K562 (cell line): ENCODE measurements at regions of chr11 and their contacts with region 1.

Region 1: GRCh38 chr11:34890812-34891211 is 25.4 kb downstream of the APIP start:
- DNase-seq: peak in 2 of 4 experiments; percentile 17 to 53
- ATAC-seq: peak; percentile 71
- H3K4me3 ChIP-seq: no peak overlapping the region
- H3K27ac ChIP-seq: no peak overlapping the region
- H3K4me1 ChIP-seq: no peaks in the 10 kb centered on the region
- H3K27me3 ChIP-seq: no peaks in the 10 kb centered on the region
- CTCF ChIP-seq: peak; percentile 33 to 69 (median 41); a peak in 4 of 6 replicates
- EP300 ChIP-seq: no peak
- POLR2A ChIP-seq: no peak
- RAD21 ChIP-seq: peak; percentile 90 to 92

Region 2: DNA sequence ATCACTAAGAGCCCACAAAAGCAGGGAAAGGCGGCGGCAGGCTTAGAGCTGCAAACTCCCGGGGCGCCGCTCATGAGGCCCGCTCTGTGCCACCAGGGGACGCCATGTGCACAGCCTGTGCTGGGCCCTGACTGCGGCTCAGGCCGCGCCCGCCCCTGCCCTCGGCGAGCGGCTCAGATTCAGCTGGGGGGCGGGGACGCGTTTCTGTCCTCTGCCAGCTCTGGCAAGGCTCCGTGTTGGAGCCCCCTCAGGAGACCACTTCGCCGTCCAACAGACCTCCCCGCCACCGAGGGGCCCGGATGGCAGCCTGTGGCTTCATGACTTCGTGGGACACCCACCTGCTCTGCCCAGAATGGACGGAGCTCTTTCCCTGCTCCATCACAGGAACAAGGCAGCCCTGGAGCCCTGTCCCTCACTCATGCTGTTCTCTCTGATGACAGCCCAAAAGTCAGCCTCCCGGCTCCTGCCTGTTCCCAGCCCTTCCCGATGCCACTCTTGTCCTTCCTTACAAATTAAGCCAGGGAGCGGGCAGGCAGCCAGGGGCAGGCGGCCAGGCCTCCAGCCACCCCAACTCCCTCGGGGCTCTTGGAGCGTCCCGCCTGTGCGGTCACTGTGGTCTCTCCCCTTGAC is 716.3 kb before region 1 on chr11:
- CTCF ChIA-PET with region 1: interaction called, 8 read pairs
- POLR2A ChIA-PET with region 1: no interaction called
- in situ Hi-C with region 1: no loop called
- intact Hi-C with region 1: loop called (anchors 10 kb)
- DNase-seq: peak; percentile 84 to 90 (median 88)
- ATAC-seq: peak; percentile 99
- H3K4me3 ChIP-seq: peak overlapping the region; percentile 16; the same call in 1 of the 2 replicates
- H3K27ac ChIP-seq: no peak overlapping the region
- H3K4me1 ChIP-seq: peaks cover 2 to 18% of the 10 kb centered on the region in 2 experiments; a peak in 3 of 5 replicates
- H3K27me3 ChIP-seq: peaks cover 27 to 58% of the 10 kb centered on the region in 2 experiments; a peak in 4 of 5 replicates
- CTCF ChIP-seq: peak; percentile 88 to 97 (median 94)
- EP300 ChIP-seq: no peak
- POLR2A ChIP-seq: no peak
- RAD21 ChIP-seq: peak; percentile 97 to 99

Region 3: DNA sequence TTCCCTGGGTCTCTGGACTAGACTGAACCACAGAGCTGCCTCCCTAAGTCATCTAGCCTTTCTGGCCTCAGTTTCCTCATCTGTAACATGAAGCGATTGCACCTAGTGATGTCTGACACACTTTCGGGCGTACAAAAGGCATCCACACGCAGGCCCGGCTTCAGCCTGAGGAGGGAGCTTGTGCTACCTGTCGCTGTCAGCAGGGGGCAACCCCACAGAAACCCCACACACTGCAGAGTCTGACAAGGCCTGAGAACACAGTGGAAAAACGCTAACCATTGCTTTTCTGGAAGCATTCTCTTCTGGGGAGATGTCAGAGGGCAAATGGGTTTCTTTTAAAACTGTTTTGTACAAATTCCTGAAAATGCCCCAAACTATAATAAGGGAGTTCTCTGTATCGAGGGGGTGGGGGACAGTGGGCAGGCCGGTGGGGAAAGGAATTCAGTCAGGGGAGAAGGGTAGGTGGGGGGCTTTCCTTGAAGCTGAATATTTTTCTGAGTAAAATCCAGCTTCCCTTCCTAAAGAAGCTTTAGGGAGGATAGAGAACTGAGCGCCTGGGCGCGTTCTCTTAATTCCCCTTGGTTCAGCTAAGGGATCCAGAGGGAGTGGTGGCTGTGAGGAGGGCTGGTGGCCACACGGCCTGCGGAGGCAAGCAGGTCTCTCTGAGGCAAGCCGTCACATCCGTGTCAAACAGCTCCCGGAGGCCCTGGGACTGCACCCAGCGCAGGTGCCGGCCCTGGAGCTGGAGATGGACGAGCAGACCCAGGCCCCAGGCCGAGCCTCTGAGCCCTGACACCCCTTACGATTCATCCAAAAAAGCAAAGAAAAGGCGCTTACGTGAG is 377.8 kb before region 1 on chr11:
- CTCF ChIA-PET with region 1: interaction called, 4 read pairs
- POLR2A ChIA-PET with region 1: no interaction called
- in situ Hi-C with region 1: loop called (anchors 5 kb)
- intact Hi-C with region 1: loop called (anchors 2 kb)
- DNase-seq: peak; percentile 73 to 79 (median 77)
- ATAC-seq: peak; percentile 99
- H3K4me3 ChIP-seq: no peak overlapping the region
- H3K27ac ChIP-seq: no peak overlapping the region
- H3K4me1 ChIP-seq: peaks cover 0 to 3% of the 10 kb centered on the region in 2 experiments; a peak in 1 of 5 replicates
- H3K27me3 ChIP-seq: peaks cover 0 to 3% of the 10 kb centered on the region in 2 experiments; a peak in 1 of 5 replicates
- CTCF ChIP-seq: peak; percentile 85 to 95 (median 93)
- EP300 ChIP-seq: no peak
- POLR2A ChIP-seq: no peak
- RAD21 ChIP-seq: peak; percentile 63 to 74

Region 4: GRCh38 chr11:34565417-34566207 is 325.2 kb before region 1 on chr11:
- CTCF ChIA-PET with region 1: interaction called, 19 read pairs
- POLR2A ChIA-PET with region 1: interaction called, 3 read pairs
- in situ Hi-C with region 1: no loop called
- intact Hi-C with region 1: loop called (anchors 2 kb)
- DNase-seq: peak; percentile 52 to 62 (median 57)
- ATAC-seq: peak; percentile 88
- H3K4me3 ChIP-seq: no peak overlapping the region
- H3K27ac ChIP-seq: no peak overlapping the region
- H3K4me1 ChIP-seq: no peaks in the 10 kb centered on the region
- H3K27me3 ChIP-seq: peaks cover 2 to 9% of the 10 kb centered on the region in 2 experiments; a peak in 2 of 5 replicates
- CTCF ChIP-seq: peak; percentile 64 to 74 (median 69)
- EP300 ChIP-seq: no peak
- POLR2A ChIP-seq: no peak
- RAD21 ChIP-seq: peak; percentile 47 to 80

Region 5: GRCh38 chr11:34791780-34792542 is 98.9 kb before region 1 on chr11:
- CTCF ChIA-PET with region 1: no interaction called
- POLR2A ChIA-PET with region 1: no interaction called
- in situ Hi-C with region 1: no loop called
- intact Hi-C with region 1: loop called (anchors 2 kb)
- DNase-seq: peak; percentile 29 to 66 (median 38)
- ATAC-seq: peak; percentile 87
- H3K4me3 ChIP-seq: no peak overlapping the region
- H3K27ac ChIP-seq: peak overlapping the region; percentile 49; the same call in 1 of the 3 replicates
- H3K4me1 ChIP-seq: no peaks in the 10 kb centered on the region; a peak in 2 of 5 replicates
- H3K27me3 ChIP-seq: no peaks in the 10 kb centered on the region
- CTCF ChIP-seq: peak in 2 of 3 experiments; percentile 26 to 28; a peak in 3 of 6 replicates
- EP300 ChIP-seq: no peak
- POLR2A ChIP-seq: no peak
- RAD21 ChIP-seq: no peak